ENCODE measurements at regions of chr9 and their contacts with region 1.

Region 1: DNA sequence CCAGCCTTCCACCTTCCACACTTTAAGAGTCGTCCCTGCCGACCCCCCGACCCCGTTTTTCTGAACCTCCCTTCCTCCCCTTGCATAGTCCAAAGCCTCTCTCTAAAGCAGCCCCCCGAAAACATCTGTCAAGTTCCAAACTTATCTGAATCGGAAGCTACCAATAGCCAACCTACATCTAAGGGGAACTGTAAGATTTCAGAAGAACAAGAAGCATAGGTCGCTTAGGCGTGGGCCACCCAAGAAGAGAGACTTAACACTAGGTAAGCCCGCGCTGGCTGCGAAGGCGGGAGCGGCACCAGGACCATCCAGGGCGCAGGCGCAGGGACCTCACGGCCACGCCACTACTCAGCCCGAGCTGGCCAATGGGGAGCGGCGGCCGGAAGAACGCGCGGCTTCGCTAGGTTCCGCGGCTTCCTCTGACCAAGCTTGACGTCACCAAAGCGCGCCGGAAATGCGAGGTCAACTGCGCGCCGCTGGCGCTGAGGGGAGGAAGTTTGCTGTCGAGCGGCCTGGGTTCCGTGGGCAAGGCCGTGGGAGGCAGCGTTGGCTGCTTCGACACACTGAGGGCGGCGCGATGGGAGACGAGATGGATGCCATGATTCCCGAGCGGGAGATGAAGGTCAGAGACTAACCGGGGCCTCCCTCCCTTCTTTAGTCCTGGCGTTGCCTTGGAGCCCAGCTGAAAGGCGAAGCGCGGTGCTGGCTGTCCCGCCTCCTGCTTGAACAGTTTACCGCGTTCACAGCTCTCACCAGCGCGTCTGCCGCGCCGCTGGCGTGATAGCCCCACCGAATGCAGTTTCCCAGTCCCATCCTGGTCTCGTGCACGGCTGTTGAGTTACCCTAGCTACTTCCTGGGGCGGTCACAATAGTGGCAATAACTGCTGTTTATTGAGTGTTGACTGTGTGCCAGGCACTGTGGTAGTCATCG is at the start of gene NUP214:
- DNase-seq: peak; percentile 99 to 100 (median 99)
- ATAC-seq: peak; percentile 97
- H3K4me3 ChIP-seq: peak within 1 kb of the TSS; percentile 83 to 95
- H3K4me3 Mint-ChIP-seq: peak within 1 kb of the TSS; percentile 99
- H3K27ac ChIP-seq: peak within 1 kb of the TSS; percentile 93 to 94
- H3K27ac Mint-ChIP-seq: peak within 1 kb of the TSS; percentile 99
- H3K4me1 ChIP-seq: peaks cover 16% of the 10 kb centered on the region
- H3K4me1 Mint-ChIP-seq: peaks cover 31% of the 10 kb centered on the region
- H3K27me3 ChIP-seq: no peaks in the 10 kb centered on the region
- H3K27me3 Mint-ChIP-seq: peaks cover 2% of the 10 kb centered on the region
- CTCF ChIP-seq: no peak
- total RNA-seq, gene NUP214: 120 to 136 TPM

Region 2: DNA sequence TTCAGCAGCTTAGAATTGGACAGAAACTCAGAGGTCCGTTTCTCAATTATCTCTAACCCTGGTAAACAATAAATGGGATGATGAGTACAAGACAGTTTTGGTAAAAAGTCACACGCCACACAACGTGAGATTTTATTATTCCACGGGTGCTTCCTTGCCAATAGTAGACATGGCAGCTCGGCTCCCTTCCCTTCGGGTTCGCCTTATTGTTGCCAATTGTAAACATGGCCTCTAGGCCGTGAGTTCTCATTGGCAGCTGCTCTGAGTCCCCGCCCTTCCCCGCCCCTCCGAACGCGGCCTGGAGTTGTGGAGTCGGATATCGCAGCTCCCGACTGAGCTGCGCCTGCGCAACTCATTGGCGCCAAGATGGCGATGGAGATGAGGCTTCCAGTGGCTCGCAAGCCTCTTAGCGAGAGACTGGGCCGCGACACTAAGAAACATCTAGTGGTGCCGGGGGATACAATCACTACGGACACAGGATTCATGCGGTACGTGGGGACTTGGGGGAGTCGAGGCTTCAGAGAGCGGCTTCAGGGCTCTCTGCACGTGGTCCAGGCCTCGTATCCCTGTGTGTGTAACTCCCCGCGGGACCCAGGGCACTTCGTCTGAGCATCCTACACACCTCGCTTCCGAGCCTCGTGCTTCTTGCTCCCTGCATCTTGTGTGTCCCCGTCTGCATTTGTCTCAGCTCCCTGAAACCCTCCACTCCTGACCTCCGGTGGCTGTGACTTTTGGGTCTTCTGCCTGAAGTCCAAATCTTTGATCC is 431.8 kb before region 1 on chr9 and contains the start of gene EXOSC2:
- CTCF ChIA-PET with region 1: no interaction called
- POLR2A ChIA-PET with region 1: interaction called, 4 read pairs
- intact Hi-C with region 1: loop called in 1 of 2 experiments (anchors 5 kb)
- DNase-seq: peak; percentile 96 to 100 (median 97)
- ATAC-seq: peak; percentile 99
- H3K4me3 ChIP-seq: peak within 1 kb of the TSS; percentile 88 to 97
- H3K4me3 Mint-ChIP-seq: peak within 1 kb of the TSS; percentile 93
- H3K27ac ChIP-seq: peak within 1 kb of the TSS; percentile 73 to 78
- H3K27ac Mint-ChIP-seq: peak within 1 kb of the TSS; percentile 95
- H3K4me1 ChIP-seq: peaks cover 25% of the 10 kb centered on the region
- H3K4me1 Mint-ChIP-seq: peaks cover 39% of the 10 kb centered on the region
- H3K27me3 ChIP-seq: no peaks in the 10 kb centered on the region
- H3K27me3 Mint-ChIP-seq: no peaks in the 10 kb centered on the region
- CTCF ChIP-seq: no peak
- total RNA-seq, gene EXOSC2: 59.1 to 59.9 TPM

Region 3: GRCh38 chr9:131277910-131278701 is 152.7 kb after region 1 on chr9:
- CTCF ChIA-PET with region 1: no interaction called
- POLR2A ChIA-PET with region 1: interaction called, 3 read pairs
- intact Hi-C with region 1: loop called in 1 of 2 experiments (anchors 1 kb)
- DNase-seq: peak; percentile 43 to 89 (median 72)
- ATAC-seq: peak; percentile 51
- H3K4me3 ChIP-seq: peak overlapping the region; percentile 45 to 49
- H3K4me3 Mint-ChIP-seq: peak overlapping the region; percentile 90
- H3K27ac ChIP-seq: peak overlapping the region; percentile 48 to 84
- H3K27ac Mint-ChIP-seq: peak overlapping the region; percentile 90
- H3K4me1 ChIP-seq: peaks cover 26% of the 10 kb centered on the region
- H3K4me1 Mint-ChIP-seq: peaks cover 30% of the 10 kb centered on the region
- H3K27me3 ChIP-seq: peaks cover 0 to 3% of the 10 kb centered on the region in 2 experiments
- H3K27me3 Mint-ChIP-seq: no peaks in the 10 kb centered on the region
- CTCF ChIP-seq: no peak

Region 4: GRCh38 chr9:132079391-132080091 is 954.1 kb after region 1 on chr9 and contains the start of gene MED27:
- CTCF ChIA-PET with region 1: no interaction called
- POLR2A ChIA-PET with region 1: no interaction called
- intact Hi-C with region 1: loop called in 1 of 2 experiments (anchors 2 kb)
- DNase-seq: peak; percentile 82 to 97 (median 94)
- ATAC-seq: peak; percentile 98
- H3K4me3 ChIP-seq: peak within 1 kb of the TSS; percentile 66 to 67
- H3K4me3 Mint-ChIP-seq: peak within 1 kb of the TSS; percentile 97
- H3K27ac ChIP-seq: peak within 1 kb of the TSS; percentile 57 to 65
- H3K27ac Mint-ChIP-seq: peak within 1 kb of the TSS; percentile 95
- H3K4me1 ChIP-seq: peaks cover 28% of the 10 kb centered on the region
- H3K4me1 Mint-ChIP-seq: peaks cover 50% of the 10 kb centered on the region
- H3K27me3 ChIP-seq: no peaks in the 10 kb centered on the region
- H3K27me3 Mint-ChIP-seq: no peaks in the 10 kb centered on the region
- CTCF ChIP-seq: no peak
- total RNA-seq, gene MED27: 17.8 to 18.6 TPM

Region 5: DNA sequence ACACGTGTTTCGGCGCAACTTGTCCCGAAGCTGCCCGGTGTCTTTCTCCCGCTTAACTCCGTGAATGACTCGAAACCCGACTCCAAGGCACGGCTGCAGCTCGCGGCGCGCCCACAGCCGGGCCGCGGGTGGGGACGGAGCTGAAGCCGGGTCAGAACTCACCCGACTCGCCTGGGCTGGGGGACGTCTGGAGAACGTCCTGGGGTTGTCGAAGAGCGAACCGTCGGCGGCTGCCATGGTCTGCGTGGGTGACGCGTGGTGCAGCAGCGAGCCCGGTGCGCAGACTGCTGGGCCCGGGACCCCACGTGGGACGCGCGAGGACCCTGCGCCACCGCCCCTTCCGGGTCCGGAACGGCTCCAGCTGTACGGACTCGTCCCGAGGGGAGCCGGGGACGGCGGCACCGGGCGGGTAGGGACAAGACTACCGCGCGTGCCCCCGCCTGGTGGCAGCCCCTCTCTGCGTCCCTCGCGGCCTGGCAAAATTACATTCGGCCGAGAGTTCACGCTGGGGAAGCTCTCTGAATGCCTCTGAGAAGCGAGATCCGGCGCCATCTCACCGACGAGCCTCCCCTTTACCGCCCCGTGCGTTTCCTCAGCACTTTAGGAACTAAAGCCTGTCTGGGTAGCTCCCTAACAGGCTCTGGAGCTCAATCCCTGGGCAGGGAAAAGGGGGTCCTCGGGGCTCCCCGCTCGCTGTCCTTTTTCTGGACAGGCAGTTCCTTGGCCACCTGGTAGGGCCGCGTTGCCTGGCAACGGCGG is 1544.5 kb after region 1 on chr9 and contains the start of gene DDX31:
- CTCF ChIA-PET with region 1: no interaction called
- POLR2A ChIA-PET with region 1: no interaction called
- intact Hi-C with region 1: loop called in 1 of 2 experiments (anchors 10 kb)
- DNase-seq: peak; percentile 79 to 94 (median 88)
- ATAC-seq: peak; percentile 77
- H3K4me3 ChIP-seq: peak within 1 kb of the TSS; percentile 100
- H3K4me3 Mint-ChIP-seq: peak within 1 kb of the TSS; percentile 91
- H3K27ac ChIP-seq: peak within 1 kb of the TSS; percentile 98 to 99
- H3K27ac Mint-ChIP-seq: peak within 1 kb of the TSS; percentile 97
- H3K4me1 ChIP-seq: peaks cover 22% of the 10 kb centered on the region
- H3K4me1 Mint-ChIP-seq: peaks cover 63% of the 10 kb centered on the region
- H3K27me3 ChIP-seq: no peaks in the 10 kb centered on the region
- H3K27me3 Mint-ChIP-seq: no peaks in the 10 kb centered on the region
- CTCF ChIP-seq: no peak
- total RNA-seq, gene DDX31: 14.1 to 15.6 TPM

Measured in CD8-positive, alpha-beta T cell (primary cell).